ENCODE measurements at regions of chr1 and their contacts with region 1.

Region 1: GRCh38 chr1:215146341-215146826 is 63.8 kb downstream of the KCNK2 start:
- DNase-seq: peak; percentile 19 to 57
- H3K4me3 ChIP-seq: no peak overlapping the region
- H3K27ac ChIP-seq: no peak overlapping the region
- H3K4me1 ChIP-seq: no peaks in the 10 kb centered on the region; the same call in 1 of the 2 replicates
- H3K27me3 ChIP-seq: no peaks in the 10 kb centered on the region
- CTCF ChIP-seq: peak; percentile 67

Region 2: DNA sequence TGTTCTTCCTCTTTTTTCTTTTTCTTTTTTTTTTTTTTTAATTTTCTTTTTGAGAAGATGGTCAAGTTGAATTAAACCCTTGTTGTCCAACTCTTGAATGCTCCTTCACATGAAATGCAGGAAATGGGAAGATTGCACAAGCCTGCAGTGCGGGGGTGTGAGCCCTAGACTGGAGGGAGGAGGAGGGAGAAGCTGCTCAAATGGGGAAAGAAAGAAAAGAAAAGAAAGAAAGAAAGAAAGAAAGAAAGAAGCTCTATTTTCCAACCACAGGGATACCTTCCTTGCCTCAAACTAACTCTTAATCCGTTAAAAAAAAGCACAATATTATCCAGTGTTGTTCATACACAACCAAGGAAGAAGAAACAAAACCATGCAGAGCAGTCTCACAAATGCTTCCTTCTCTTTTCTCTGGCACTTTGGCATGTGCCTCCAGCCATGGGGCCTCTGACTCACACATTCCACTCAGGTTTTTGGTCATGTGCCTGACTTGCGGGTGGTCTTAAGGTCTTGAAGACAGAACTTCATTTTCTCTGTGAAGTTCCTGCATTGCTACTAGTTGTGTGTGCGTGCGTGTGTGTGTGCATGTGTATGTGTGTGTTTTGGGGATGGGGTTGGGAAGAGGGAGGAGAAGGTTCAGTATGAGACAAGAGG is 1819.2 kb before region 1 on chr1:
- CTCF ChIA-PET with region 1: no interaction called
- POLR2A ChIA-PET with region 1: no interaction called
- intact Hi-C with region 1: no loop called
- DNase-seq: no peak
- H3K4me3 ChIP-seq: no peak overlapping the region
- H3K27ac ChIP-seq: no peak overlapping the region
- H3K4me1 ChIP-seq: 0 out of 2 replicates have a peak, but pooled peaks cover 8% of the 10 kb centered on the region
- H3K27me3 ChIP-seq: no peaks in the 10 kb centered on the region
- CTCF ChIP-seq: no peak

Region 3: GRCh38 chr1:214660862-214661261 is 485.5 kb before region 1 on chr1:
- CTCF ChIA-PET with region 1: no interaction called
- POLR2A ChIA-PET with region 1: no interaction called
- intact Hi-C with region 1: loop called (anchors 1 kb)
- DNase-seq: no peak
- H3K4me3 ChIP-seq: no peak overlapping the region
- H3K27ac ChIP-seq: no peak overlapping the region
- H3K4me1 ChIP-seq: no peaks in the 10 kb centered on the region
- H3K27me3 ChIP-seq: no peaks in the 10 kb centered on the region
- CTCF ChIP-seq: peak; percentile 26; the same call in 1 of the 2 replicates

Region 4: GRCh38 chr1:214808845-214809460 is 337.4 kb before region 1 on chr1:
- CTCF ChIA-PET with region 1: interaction called, 3 read pairs
- POLR2A ChIA-PET with region 1: no interaction called
- intact Hi-C with region 1: loop called (anchors 5 kb)
- DNase-seq: no peak
- H3K4me3 ChIP-seq: no peak overlapping the region
- H3K27ac ChIP-seq: no peak overlapping the region
- H3K4me1 ChIP-seq: no peaks in the 10 kb centered on the region
- H3K27me3 ChIP-seq: no peaks in the 10 kb centered on the region
- CTCF ChIP-seq: peak; percentile 55

Region 5: DNA sequence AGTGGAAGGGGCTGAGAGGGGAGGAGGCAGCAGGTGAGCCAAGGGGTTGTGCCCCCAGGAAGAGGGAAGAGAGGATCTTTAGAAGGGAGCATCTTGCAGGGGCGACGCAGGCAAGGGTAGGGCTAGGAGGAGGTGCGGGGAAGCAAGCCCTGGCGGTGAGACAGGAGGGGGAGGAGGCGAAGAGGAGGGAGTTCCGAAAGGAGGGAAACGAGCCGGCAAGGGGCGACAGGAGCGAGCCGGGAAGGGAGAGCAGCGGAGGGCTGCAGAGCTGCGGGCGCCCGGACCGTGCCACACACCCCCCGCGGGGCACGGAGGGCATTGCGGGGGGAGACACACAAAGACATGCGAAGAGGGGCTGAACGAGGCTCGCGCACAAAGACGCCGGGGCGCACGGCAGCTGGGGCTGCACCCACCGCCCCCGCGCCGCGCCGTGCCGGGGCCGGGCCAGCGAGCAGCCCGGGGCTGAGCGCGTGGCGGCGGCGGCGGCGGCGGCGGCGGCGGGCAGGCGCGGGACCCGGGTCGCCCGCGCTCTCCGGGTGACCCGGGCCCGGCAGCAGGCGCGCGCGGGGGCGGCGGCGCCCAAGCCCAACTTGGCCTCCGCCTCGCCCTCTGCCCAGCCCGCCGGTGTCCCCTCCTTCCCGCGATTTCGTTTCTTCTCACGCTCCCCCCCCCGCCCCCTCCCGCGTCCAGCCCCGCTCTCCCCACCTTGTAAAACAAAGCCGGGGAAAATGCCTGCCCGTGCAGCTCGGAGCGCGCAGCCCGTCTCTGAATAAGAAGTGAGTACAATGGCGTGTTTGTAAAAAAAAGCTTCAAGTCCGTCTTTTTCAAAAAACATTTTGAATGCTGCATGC is 63.6 kb before region 1 on chr1 and contains the start of gene KCNK2:
- CTCF ChIA-PET with region 1: no interaction called
- POLR2A ChIA-PET with region 1: no interaction called
- intact Hi-C with region 1: no loop called
- DNase-seq: peak in 1 of 2 experiments; percentile 7
- H3K4me3 ChIP-seq: peak within 1 kb of the TSS; percentile 60
- H3K27ac ChIP-seq: no peak within 1 kb of the TSS
- H3K4me1 ChIP-seq: no peaks in the 10 kb centered on the region
- H3K27me3 ChIP-seq: peaks cover 5% of the 10 kb centered on the region; the same call in 1 of the 2 replicates
- CTCF ChIP-seq: no peak
- total RNA-seq, gene KCNK2: 0.48 and 0.90 TPM in 2 replicates

Region 6: DNA sequence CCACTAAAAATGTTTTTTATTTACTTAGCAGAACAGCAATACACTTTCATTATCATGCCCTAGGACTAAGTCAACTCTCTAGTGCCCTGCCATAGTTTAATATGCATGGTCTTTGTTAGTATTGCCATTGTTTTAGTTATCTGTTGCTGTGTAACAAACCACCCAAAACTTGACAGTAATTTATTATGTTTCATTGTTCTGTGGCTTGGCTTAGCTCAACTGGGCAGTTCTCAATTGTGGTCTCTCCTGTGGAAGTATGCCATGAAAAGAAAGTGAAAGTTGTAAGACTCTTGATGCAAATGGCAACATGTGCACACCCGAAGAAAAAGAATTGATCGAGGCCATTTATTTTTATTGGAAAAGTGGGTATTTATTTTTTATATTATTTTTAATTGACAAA is 214.4 kb after region 1 on chr1:
- CTCF ChIA-PET with region 1: no interaction called
- POLR2A ChIA-PET with region 1: no interaction called
- intact Hi-C with region 1: no loop called
- DNase-seq: no peak
- H3K4me3 ChIP-seq: no peak overlapping the region
- H3K27ac ChIP-seq: no peak overlapping the region
- H3K4me1 ChIP-seq: no peaks in the 10 kb centered on the region
- H3K27me3 ChIP-seq: no peaks in the 10 kb centered on the region
- CTCF ChIP-seq: no peak

Region 7: DNA sequence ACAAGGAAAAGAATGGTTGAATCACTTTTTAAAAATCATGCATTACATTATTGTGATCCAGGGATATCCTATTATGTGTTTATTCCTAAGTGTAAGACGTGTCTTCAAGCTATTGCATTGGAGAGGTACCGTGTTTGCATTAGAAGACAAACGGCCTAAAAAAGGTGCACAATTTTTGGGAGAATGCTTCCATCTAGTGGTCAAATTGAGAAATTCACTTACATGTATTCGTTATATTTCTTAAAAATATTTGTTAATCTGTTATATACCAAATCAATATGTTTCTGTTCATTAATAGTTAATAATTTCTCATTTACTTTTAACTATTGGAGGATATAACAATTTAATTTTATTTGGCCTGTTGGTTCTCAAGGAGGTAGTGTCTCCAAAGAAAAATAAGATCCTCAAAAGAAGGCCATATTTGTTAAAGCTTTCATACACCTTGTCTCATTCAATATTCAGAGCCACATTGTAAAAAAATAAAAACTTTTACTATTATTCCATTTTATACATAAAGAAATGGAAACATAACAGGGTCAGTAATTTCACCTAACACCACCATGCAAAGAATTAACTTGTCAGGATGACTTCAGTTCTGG is 380.3 kb after region 1 on chr1:
- CTCF ChIA-PET with region 1: no interaction called
- POLR2A ChIA-PET with region 1: no interaction called
- intact Hi-C with region 1: loop called (anchors 5 kb)
- DNase-seq: no peak
- H3K4me3 ChIP-seq: no peak overlapping the region
- H3K27ac ChIP-seq: no peak overlapping the region
- H3K4me1 ChIP-seq: no peaks in the 10 kb centered on the region
- H3K27me3 ChIP-seq: no peaks in the 10 kb centered on the region
- CTCF ChIP-seq: peak; percentile 90

Region 8: DNA sequence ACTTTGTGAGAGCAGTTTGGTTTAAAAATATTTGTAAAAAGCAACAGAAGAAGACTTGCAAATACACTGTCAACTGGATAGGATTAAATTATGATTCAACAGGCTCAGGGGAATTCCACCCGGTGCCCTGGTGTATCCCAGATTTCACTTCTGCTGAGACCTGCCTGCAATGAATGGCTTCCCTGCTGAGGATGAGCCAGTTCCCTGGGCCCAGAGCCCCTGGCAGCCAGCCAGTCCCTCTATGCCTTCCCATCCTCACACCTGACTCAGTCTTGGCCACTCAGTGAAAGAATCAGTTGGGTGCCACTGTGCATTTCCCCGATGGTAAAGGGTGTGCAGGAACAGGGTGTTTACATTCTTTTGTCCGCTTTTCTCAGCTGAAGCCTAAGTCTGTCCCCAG is 485.1 kb after region 1 on chr1:
- CTCF ChIA-PET with region 1: no interaction called
- POLR2A ChIA-PET with region 1: no interaction called
- intact Hi-C with region 1: no loop called
- DNase-seq: peak in 1 of 2 experiments; percentile 55
- H3K4me3 ChIP-seq: no peak overlapping the region
- H3K27ac ChIP-seq: no peak overlapping the region
- H3K4me1 ChIP-seq: no peaks in the 10 kb centered on the region; the same call in 1 of the 2 replicates
- H3K27me3 ChIP-seq: no peaks in the 10 kb centered on the region
- CTCF ChIP-seq: no peak